ENCODE measurements at regions of chr15 and their contacts with region 1.

Region 1: GRCh38 chr15:81111510-81112470 is 22.3 kb upstream of the CFAP161 start:
- DNase-seq: no peak
- ATAC-seq: no peak
- H3K4me3 ChIP-seq: no peak overlapping the region
- H3K27ac ChIP-seq: no peak overlapping the region
- H3K4me1 ChIP-seq: no peaks in the 10 kb centered on the region
- H3K27me3 ChIP-seq: no peaks in the 10 kb centered on the region; a peak in 2 of 5 replicates
- CTCF ChIP-seq: no peak
- EP300 ChIP-seq: no peak
- POLR2A ChIP-seq: no peak
- RAD21 ChIP-seq: no peak

Region 2: DNA sequence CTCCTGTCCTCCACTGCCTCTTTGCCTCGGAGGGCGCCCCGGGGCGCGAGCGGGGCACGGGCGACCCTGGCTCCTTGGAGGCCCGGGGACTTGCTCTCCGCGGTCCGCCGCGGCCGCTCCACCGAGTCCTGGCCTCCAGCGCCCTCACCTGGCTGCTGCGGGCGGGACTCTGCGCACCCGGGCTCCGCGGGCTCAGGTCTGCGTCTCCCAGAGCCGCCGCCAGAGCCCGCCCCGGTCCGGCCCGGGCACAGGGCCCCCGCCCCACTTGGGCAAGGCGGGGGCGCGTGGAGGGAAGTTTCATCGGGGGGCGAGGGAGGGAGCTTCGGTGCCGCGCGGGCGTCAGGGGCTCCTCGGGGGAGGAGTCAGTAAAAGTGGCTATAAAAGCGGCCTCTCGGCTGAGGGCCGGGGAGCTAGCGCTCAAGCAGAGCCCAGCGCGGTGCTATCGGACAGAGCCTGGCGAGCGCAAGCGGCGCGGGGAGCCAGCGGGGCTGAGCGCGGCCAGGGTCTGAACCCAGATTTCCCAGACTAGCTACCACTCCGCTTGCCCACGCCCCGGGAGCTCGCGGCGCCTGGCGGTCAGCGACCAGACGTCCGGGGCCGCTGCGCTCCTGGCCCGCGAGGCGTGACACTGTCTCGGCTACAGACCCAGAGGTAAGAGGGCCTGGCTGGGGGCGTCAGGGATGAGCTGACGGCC is 332.7 kb before region 1 on chr15 and contains the start of gene CEMIP:
- CTCF ChIA-PET with region 1: no interaction called
- POLR2A ChIA-PET with region 1: no interaction called
- in situ Hi-C with region 1: no loop called
- intact Hi-C with region 1: no loop called
- DNase-seq: peak; percentile 71
- ATAC-seq: peak; percentile 91
- H3K4me3 ChIP-seq: peak within 1 kb of the TSS; percentile 75 to 82 (median 76)
- H3K27ac ChIP-seq: no peak within 1 kb of the TSS
- H3K4me1 ChIP-seq: peaks cover 44% of the 10 kb centered on the region
- H3K27me3 ChIP-seq: peaks cover 2 to 4% of the 10 kb centered on the region in 2 experiments; a peak in 2 of 5 replicates
- CTCF ChIP-seq: peak; percentile 85
- EP300 ChIP-seq: no peak
- POLR2A ChIP-seq: peak; percentile 64 to 86
- RAD21 ChIP-seq: peak; percentile 98
- total RNA-seq, gene CEMIP: 1.9 and 4.3 TPM in 2 replicates

Region 3: DNA sequence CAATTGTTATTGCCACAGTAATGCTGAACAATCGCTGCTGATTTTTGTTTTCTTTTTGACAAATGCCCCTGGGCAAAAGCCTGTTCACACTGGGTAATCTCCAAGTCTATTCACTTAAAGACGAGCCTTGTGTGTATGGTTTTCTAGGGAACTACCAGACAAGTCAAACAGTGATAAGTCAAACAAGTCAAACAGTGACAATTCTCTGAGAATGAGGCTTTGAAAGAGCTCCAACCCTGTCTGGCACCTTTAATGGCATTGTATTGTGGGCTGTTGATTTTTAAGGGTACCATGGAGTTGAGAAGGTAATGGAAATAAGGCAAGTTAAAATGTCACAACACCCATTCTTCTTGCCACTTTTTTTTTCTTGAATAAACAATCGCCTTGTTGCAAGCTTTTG is 321.7 kb after region 1 on chr15:
- CTCF ChIA-PET with region 1: no interaction called
- POLR2A ChIA-PET with region 1: no interaction called
- in situ Hi-C with region 1: no loop called
- intact Hi-C with region 1: no loop called
- DNase-seq: no peak
- ATAC-seq: no peak
- H3K4me3 ChIP-seq: no peak overlapping the region
- H3K27ac ChIP-seq: no peak overlapping the region
- H3K4me1 ChIP-seq: no peaks in the 10 kb centered on the region
- H3K27me3 ChIP-seq: no peaks in the 10 kb centered on the region; a peak in 1 of 5 replicates
- CTCF ChIP-seq: no peak
- EP300 ChIP-seq: no peak
- POLR2A ChIP-seq: no peak
- RAD21 ChIP-seq: no peak

Region 4: DNA sequence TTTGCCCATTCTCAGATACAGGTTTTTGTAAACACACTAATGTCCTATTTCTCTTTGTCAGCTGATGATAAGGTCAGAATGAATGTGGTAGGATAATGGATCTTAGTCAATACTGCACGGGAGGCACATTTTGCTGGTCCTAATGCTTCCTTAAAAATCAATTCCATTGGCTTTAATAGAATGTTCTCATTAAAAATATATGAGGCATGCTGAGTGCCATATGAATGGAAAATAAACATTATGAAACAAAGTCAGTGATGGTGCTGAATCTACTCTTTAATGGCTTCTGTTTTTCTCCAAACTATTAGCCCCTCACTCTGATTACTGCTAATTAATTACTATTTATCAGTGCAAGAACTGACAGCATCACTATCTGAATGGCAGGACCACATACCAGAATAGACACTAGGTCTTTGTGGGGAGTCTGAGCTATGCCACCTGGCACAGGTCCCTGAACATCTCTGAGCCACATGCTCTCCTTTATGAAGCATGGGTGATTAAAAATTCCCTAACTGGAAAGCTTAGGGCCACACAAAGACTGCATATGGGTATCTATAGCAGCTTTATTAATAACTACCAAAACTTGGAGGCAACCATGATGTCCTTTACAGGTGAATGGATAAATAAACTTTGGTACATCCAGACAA is 655.2 kb after region 1 on chr15:
- CTCF ChIA-PET with region 1: no interaction called
- POLR2A ChIA-PET with region 1: no interaction called
- in situ Hi-C with region 1: no loop called
- intact Hi-C with region 1: loop called (anchors 10 kb)
- DNase-seq: no peak
- ATAC-seq: no peak
- H3K4me3 ChIP-seq: no peak overlapping the region
- H3K27ac ChIP-seq: no peak overlapping the region
- H3K4me1 ChIP-seq: no peaks in the 10 kb centered on the region
- H3K27me3 ChIP-seq: no peaks in the 10 kb centered on the region; a peak in 2 of 5 replicates
- CTCF ChIP-seq: no peak
- EP300 ChIP-seq: no peak
- POLR2A ChIP-seq: no peak
- RAD21 ChIP-seq: no peak